Activated CD4-positive, alpha-beta memory T cell treated with anti-CD3 and anti-CD28 coated beads for 36 hours (primary cell): ENCODE measurements at regions of chr21 and their contacts with region 1.

Region 1: DNA sequence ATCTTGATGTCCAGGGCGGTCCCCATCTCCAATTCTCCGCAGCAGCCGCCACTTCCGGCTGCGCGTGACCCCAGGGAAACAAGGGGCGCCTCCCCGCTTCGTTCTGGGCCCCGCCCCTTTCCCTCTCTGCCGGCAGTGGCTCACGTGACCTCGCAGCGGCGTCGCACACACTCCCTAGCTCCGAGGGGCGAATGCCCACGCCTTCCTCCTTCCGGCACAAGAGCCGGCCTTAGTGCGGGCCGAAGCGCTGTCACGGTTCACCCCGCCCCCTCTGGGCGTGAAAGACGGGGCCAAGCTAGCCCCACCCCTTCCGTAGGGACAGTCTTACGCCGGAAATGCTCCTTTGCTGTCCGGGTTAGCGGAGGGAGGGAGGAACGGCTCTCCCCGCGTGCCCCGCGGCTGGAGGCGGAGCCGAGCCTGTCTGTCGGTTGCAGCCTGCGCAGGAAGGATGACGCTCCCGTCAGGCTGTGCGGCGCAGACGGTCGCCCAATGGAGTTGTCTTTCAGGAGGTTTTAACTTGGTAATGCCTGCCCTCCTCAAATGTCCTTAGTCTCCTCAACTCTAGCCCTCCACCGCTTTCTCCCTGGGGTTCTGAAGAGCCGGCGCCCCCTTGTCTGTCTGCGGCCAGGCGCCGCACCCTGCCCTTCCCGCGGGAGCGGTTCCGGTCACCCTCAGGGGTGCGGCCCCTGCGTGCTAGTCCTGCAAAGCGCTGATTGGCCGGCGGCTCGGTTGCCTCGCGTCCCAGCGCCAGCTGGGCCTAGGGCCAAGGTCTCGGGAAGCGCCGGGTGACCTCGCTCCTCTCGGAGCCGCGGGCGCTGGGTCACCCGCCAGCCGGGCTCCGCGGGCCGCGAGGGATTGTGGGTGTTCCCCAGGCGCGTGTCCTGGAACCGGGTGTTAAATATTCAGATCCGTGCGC is at the start of gene VPS26C:
- DNase-seq: peak; percentile 99
- H3K4me3 Mint-ChIP-seq: peak within 1 kb of the TSS; percentile 95
- H3K27ac Mint-ChIP-seq: peak within 1 kb of the TSS; percentile 99
- H3K4me1 Mint-ChIP-seq: peaks cover 39% of the 10 kb centered on the region
- H3K27me3 Mint-ChIP-seq: no peaks in the 10 kb centered on the region
- total RNA-seq, gene VPS26C: 50.3 to 57.2 TPM

Region 2: DNA sequence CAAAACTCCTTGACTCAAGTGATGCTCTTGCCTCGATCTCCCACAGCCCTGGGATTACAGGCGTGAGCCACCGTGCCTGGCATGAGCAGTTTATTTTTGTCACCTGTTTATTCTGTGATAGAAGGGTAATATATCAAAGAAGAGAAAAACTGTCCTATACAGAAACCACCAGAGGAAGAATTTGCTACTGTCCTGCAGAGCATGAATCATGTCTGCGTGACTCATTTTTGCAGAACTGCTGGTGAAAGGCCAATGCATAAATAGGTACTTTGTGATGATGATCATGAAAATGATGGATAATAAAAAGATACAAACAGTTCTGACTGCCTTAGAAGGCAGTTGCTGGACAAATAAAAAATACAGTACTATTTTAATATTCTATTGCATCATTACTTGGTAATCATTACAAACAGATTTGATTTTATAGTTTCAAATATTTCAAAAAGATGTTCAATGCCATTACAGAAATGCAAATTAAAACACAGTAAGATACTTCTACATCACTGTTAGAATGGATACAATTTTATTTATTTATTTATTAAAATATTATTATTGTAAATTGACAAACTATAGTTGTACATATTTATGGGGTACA is 234.6 kb before region 1 on chr21:
- CTCF ChIA-PET with region 1: no interaction called
- POLR2A ChIA-PET with region 1: no interaction called
- intact Hi-C with region 1: no loop called
- DNase-seq: no peak
- H3K4me3 Mint-ChIP-seq: no peak overlapping the region
- H3K27ac Mint-ChIP-seq: no peak overlapping the region
- H3K4me1 Mint-ChIP-seq: no peaks in the 10 kb centered on the region
- H3K27me3 Mint-ChIP-seq: no peaks in the 10 kb centered on the region

Region 3: DNA sequence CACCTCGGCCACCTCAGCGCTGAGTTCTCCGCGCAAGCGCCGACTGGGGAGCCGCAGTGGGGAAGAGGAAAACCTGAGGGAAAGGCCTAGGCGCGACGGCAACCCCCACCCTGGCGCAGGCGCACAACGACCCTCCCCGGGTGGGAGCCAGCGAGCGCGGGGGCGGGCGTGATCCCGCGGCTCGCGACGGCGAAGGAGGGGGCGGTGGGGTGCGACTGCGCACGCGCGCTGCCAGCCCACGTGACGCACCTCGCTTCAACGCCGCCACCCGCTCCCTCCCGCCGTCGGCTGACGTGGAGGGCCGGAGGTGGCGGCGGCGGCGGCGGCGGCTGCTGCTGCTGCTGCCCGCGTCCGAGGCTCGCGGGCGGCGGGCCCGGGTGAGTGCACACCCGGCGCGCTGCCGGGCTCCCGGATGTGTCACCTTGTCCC is 194.5 kb before region 1 on chr21 and contains the starts of genes PIGP and TTC3:
- CTCF ChIA-PET with region 1: no interaction called
- POLR2A ChIA-PET with region 1: no interaction called
- intact Hi-C with region 1: loop called (anchors 1 kb)
- DNase-seq: peak; percentile 97
- H3K4me3 Mint-ChIP-seq: peak within 1 kb of the TSS; percentile 99
- H3K27ac Mint-ChIP-seq: peak within 1 kb of the TSS; percentile 89
- H3K4me1 Mint-ChIP-seq: peaks cover 50% of the 10 kb centered on the region
- H3K27me3 Mint-ChIP-seq: no peaks in the 10 kb centered on the region
- total RNA-seq, gene PIGP: 19.2 to 21.2 TPM
- total RNA-seq, gene TTC3: 63.1 to 65.6 TPM

Region 4: DNA sequence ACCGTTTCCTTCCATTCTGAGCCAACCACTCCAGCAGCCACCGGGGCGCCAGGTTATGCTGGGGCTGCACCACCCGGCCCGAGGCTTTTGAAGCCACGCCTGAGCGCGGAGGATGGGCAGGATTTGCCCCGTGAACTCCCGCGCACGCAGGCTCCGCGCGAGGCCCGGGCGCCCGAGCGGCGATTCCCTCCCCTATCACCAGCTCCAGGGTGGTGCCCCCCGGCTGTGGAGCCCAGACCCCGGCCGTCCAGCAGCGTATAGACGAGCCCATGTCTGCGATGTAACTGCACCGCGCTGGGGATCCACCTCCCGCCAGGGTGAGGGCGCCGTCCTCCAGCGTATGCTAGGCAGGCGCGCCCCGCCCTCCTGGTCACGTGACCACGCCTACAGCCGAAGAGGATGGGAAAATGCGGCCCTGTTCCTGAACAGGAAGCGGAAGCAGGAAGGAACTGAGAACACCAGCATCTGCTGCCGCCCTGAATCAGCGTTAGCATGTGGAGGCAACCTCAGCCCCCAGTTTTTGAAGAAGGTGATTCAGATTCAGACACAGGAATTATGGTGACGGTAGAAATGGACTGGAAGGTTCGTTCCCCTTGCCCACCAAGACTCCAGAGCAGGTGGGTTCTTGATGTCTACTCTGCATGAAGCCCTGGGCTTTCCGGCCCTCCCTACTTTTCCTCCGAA is 46.4 kb before region 1 on chr21:
- CTCF ChIA-PET with region 1: interaction called, 4 read pairs
- POLR2A ChIA-PET with region 1: interaction called, 7 read pairs
- intact Hi-C with region 1: loop called (anchors 1 kb)
- DNase-seq: peak; percentile 97
- H3K4me3 Mint-ChIP-seq: peak overlapping the region; percentile 86
- H3K27ac Mint-ChIP-seq: peak overlapping the region; percentile 96
- H3K4me1 Mint-ChIP-seq: peaks cover 36% of the 10 kb centered on the region
- H3K27me3 Mint-ChIP-seq: no peaks in the 10 kb centered on the region

Region 5: DNA sequence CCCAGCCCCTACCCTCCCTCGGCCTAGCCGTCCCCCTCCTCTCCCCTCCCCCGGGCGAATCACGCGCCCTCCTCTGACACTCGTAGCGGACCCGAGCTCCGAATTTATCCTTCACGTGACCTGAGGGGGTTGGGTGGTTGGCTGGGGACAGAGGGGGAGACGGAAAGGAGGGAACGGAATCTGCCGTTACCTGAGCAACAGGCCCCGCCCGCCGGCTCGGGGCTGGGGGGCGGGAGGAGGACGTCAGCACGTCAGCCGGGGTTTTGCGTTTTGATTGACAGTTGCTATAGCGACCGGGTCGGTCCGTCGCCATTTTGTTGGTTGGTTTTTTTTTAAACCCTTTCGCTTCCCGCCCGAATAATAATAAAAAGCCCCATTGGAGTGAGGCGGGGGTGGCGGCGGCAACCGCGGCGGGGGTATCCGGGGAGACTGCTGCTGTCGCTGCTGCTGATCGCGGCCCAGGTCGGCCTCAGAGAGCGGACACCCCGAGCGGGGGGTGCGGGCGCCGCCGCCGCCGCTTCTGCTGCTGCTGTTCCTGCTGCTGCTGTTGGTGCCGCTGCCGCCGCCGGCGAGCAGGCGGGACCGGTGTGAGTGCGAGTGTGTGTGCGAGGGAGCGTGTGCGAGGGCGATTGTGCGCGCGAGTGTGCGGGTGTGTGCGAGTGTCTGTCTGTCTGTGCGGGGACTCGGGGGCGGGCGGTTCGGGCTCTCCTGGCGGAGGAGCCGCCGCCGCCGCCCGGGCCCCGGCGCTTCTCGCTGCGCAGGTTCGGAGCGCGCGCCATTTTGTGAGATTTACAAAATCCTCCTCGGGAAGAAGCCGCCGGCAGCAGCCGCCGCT is 99.2 kb after region 1 on chr21 and contains the start of gene DYRK1A:
- CTCF ChIA-PET with region 1: interaction called, 4 read pairs
- POLR2A ChIA-PET with region 1: interaction called, 22 read pairs
- intact Hi-C with region 1: loop called (anchors 1 kb)
- DNase-seq: peak; percentile 99
- H3K4me3 Mint-ChIP-seq: peak within 1 kb of the TSS; percentile 98
- H3K27ac Mint-ChIP-seq: peak within 1 kb of the TSS; percentile 99
- H3K4me1 Mint-ChIP-seq: peaks cover 34% of the 10 kb centered on the region
- H3K27me3 Mint-ChIP-seq: no peaks in the 10 kb centered on the region
- total RNA-seq, gene DYRK1A: 47.6 to 51.1 TPM

Region 6: DNA sequence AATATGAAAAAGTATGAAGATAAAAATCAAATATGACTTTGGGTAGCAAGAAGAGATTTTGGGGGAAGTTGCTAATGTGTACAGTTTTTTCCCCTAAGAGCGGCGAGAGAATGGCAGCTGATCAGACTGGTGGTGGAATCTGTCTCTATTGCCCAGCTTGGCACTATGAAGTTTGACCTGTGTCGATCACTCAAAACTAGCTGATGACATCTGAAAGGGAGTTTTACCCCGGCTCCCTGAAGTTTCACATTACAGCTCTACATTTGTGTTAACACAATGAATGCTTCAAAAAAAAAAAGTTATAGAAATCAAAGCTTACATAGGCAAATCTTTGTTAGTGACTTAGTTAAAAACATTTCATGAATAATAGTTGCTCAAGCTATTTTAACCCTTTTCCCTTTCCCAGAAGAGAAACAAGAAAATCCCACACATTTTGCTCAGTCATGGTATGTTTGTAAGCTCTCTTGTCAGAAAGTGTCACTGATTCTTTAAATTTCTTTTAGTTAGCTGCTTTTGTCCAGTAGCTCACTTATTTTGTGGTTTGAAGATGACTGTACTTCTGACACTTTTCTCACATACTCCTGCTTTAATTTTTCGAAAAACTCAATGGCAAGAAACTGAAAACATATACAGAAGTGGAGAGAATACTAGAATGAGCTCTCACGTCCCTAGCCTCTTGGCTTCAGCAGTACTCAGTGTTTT is 140.3 kb after region 1 on chr21:
- CTCF ChIA-PET with region 1: interaction called, 5 read pairs
- POLR2A ChIA-PET with region 1: interaction called, 4 read pairs
- intact Hi-C with region 1: loop called (anchors 5 kb)
- DNase-seq: no peak
- H3K4me3 Mint-ChIP-seq: peak overlapping the region; percentile 22
- H3K27ac Mint-ChIP-seq: peak overlapping the region; percentile 73
- H3K4me1 Mint-ChIP-seq: peaks cover 84% of the 10 kb centered on the region
- H3K27me3 Mint-ChIP-seq: no peaks in the 10 kb centered on the region

Region 7: DNA sequence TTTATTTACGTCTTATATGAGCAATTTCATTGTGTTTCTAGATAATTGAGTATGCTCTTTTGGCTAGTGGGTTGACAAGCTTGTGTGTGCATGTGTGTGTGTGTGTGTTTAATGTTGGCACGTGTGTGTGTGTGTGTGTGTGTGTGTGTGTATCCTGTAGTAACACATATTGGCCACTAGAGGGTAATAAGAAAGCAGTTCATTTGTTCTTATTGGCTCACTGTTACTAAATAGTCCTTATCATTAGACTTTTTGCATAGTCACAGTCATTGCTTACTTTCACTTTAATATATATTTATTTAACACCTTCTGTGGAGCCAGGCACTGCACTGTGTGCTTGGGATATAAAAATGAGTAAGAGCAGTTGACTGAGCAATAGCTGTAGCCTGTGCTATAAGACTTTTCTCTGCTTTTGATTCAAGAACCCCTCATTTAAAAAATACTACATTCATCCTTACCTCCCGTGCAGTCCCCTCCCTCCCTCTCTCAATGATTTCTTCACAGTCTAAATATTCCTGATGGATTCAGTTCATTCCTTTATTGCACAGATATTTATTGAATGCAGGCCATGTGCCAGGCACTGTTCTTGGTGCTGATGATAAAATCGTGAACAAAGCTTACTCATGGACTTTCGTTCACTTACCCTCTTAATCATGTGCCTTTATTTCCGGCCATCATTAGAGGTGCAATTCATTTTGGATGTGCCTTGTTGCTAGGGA is 195.7 kb after region 1 on chr21:
- CTCF ChIA-PET with region 1: interaction called, 3 read pairs
- POLR2A ChIA-PET with region 1: no interaction called
- intact Hi-C with region 1: loop called (anchors 5 kb)
- DNase-seq: peak; percentile 25
- H3K4me3 Mint-ChIP-seq: no peak overlapping the region
- H3K27ac Mint-ChIP-seq: no peak overlapping the region
- H3K4me1 Mint-ChIP-seq: peaks cover 70% of the 10 kb centered on the region
- H3K27me3 Mint-ChIP-seq: no peaks in the 10 kb centered on the region